Prostate gland (tissue), 2 donors: ENCODE measurements at regions of chr13 and their contacts with region 1.

Region 1: GRCh38 chr13:93233997-93234416 is 7.4 kb downstream of the GPC6 start:
- DNase-seq: no peak
- H3K4me3 ChIP-seq: no peak overlapping the region
- H3K27ac ChIP-seq: no peak overlapping the region
- H3K4me1 ChIP-seq: no peaks in the 10 kb centered on the region
- H3K27me3 ChIP-seq: no peaks in the 10 kb centered on the region
- CTCF ChIP-seq: no peak
- POLR2A ChIP-seq: no peak

Region 2: DNA sequence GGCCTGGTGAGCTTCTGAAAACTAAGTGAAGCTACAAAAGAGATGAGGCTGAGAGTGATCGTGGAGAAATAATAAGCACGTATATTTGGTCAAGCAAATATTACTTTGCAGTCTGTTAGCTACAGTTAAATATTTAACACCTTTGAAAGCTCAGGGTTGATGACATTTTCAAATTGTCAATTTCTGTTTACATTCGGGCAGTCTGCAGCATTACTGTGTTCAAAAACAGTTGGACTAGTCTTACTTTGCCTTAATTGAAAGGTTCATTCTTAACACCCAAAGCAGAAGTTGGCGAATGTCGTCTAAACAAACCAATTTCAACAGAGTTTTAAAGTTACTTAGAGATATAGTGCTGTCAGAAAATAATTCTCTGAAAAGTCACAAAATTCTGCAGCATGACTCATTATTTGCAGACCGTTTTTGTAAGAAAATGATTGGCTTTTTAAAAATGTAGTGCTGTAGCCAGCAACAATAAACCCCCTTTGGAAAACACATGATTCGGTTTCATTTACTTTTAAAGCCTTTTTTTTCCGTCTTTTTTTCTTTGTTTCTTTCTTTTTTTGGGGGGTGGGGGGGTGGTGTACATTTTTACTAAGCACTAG is 541.6 kb after region 1 on chr13:
- intact Hi-C with region 1: loop called (anchors 10 kb)
- DNase-seq: no peak
- H3K4me3 ChIP-seq: no peak overlapping the region
- H3K27ac ChIP-seq: no peak overlapping the region
- H3K4me1 ChIP-seq: no peaks in the 10 kb centered on the region
- H3K27me3 ChIP-seq: no peaks in the 10 kb centered on the region
- CTCF ChIP-seq: no peak
- POLR2A ChIP-seq: no peak